Activated B cell treated with CpG ODN at 0.5 μM for 24 hours (primary cell): ENCODE measurements at regions of chr21 and their contacts with region 1.

Region 1: DNA sequence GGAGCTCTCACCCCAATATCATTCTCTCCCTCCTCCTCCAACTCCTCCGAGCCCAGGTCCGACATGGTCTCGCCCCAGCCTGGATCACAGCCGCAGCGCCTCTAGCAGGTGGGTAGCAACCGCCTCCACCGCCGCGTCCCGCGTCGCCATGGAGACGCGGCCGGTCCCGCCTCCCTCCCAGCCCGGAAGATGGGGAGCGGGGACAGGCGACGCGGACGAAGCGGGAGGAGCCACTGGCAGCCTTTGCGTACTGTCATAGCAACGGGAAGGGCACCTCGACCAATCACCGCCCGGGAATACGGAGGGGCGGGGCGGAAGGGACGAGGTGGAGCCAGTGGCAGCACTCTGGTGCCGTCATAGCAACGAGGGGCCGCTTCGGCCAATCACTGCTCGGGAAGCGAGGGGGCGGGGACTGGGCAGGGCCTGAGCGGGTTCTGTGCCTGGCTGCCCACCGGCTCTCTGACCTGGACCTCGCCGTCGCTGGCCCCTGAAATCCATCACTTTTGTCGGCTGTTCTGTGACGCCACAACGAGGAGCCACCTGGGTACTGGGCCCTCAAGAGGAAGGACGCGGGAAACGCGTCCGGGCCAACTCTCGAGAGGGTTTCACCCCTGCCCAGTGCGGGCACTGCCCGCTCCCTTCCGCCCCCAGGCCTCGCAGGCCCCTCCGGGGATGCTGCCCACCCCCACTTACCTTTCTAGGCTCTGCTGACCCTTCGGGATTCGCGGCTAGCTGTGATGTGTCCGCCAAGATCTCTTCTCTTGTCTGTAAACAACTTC is at the start of gene RSPH1:
- DNase-seq: peak; percentile 99
- ATAC-seq: peak; percentile 96
- H3K4me3 Mint-ChIP-seq: peak within 1 kb of the TSS; percentile 88
- H3K27ac Mint-ChIP-seq: peak within 1 kb of the TSS; percentile 83
- H3K4me1 Mint-ChIP-seq: peaks cover 13% of the 10 kb centered on the region
- H3K27me3 Mint-ChIP-seq: no peaks in the 10 kb centered on the region
- CTCF ChIP-seq: no peak
- total RNA-seq, gene RSPH1: 0.38 TPM in 1 of 2 replicates, not detected in the other

Region 2: GRCh38 chr21:41879190-41879998 is 616.9 kb before region 1 on chr21 and contains the start of gene PRDM15:
- CTCF ChIA-PET with region 1: no interaction called
- POLR2A ChIA-PET with region 1: no interaction called
- intact Hi-C with region 1: loop called (anchors 1 kb)
- DNase-seq: peak; percentile 83
- ATAC-seq: peak; percentile 63
- H3K4me3 Mint-ChIP-seq: peak within 1 kb of the TSS; percentile 90
- H3K27ac Mint-ChIP-seq: peak within 1 kb of the TSS; percentile 93
- H3K4me1 Mint-ChIP-seq: peaks cover 39% of the 10 kb centered on the region
- H3K27me3 Mint-ChIP-seq: no peaks in the 10 kb centered on the region
- CTCF ChIP-seq: no peak
- total RNA-seq, gene PRDM15: 12.8 and 13.6 TPM in 2 replicates

Region 3: GRCh38 chr21:42125571-42126544 is 370.5 kb before region 1 on chr21:
- CTCF ChIA-PET with region 1: no interaction called
- POLR2A ChIA-PET with region 1: no interaction called
- intact Hi-C with region 1: no loop called
- DNase-seq: no peak
- ATAC-seq: no peak
- H3K4me3 Mint-ChIP-seq: no peak overlapping the region
- H3K27ac Mint-ChIP-seq: no peak overlapping the region
- H3K4me1 Mint-ChIP-seq: peaks cover 8% of the 10 kb centered on the region
- H3K27me3 Mint-ChIP-seq: peaks cover 37% of the 10 kb centered on the region
- CTCF ChIP-seq: no peak

Region 4: DNA sequence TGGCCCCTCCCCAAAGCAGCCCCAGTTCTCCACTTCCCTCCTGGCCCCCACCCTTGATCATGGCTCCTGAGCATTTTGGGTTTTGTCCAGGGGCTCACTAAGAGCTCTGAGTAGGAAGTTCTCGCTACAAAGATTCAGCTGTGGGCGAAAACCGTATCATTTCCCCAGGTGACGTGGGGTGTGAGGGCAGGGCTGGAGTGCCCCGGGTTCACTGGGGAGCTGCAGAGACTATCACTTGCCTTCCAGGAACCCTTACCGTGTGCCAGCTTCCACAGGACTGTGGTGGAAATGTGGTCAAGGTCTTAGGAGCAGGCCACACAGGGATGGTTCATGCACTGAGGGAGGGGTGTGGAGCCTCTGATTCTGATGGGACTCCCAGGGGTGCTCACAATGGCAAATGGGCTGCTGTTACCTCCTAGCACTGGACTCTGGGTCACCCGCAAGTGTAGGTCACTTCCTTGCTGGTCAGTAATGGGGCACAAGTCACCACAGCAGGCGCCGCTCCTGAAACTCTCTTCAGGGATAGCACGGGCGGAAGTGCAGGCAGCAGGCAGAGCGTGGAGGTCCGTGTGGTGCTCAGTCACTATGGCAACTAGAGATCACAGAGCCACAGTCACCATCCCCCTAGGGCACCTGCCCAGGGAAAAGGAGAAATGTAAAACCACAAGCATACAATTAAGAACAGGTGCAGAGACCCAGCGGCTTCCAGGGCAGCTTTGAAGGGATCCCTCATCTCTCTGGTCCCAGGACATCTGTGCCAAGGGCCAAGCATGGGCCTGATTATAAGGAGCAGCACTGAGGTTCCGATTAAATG is 35.7 kb before region 1 on chr21:
- CTCF ChIA-PET with region 1: no interaction called
- POLR2A ChIA-PET with region 1: interaction called, 5 read pairs
- intact Hi-C with region 1: loop called (anchors 1 kb)
- DNase-seq: peak; percentile 62
- ATAC-seq: peak; percentile 60
- H3K4me3 Mint-ChIP-seq: peak overlapping the region; percentile 78
- H3K27ac Mint-ChIP-seq: peak overlapping the region; percentile 98
- H3K4me1 Mint-ChIP-seq: peaks cover 65% of the 10 kb centered on the region
- H3K27me3 Mint-ChIP-seq: no peaks in the 10 kb centered on the region
- CTCF ChIP-seq: no peak

Region 5: DNA sequence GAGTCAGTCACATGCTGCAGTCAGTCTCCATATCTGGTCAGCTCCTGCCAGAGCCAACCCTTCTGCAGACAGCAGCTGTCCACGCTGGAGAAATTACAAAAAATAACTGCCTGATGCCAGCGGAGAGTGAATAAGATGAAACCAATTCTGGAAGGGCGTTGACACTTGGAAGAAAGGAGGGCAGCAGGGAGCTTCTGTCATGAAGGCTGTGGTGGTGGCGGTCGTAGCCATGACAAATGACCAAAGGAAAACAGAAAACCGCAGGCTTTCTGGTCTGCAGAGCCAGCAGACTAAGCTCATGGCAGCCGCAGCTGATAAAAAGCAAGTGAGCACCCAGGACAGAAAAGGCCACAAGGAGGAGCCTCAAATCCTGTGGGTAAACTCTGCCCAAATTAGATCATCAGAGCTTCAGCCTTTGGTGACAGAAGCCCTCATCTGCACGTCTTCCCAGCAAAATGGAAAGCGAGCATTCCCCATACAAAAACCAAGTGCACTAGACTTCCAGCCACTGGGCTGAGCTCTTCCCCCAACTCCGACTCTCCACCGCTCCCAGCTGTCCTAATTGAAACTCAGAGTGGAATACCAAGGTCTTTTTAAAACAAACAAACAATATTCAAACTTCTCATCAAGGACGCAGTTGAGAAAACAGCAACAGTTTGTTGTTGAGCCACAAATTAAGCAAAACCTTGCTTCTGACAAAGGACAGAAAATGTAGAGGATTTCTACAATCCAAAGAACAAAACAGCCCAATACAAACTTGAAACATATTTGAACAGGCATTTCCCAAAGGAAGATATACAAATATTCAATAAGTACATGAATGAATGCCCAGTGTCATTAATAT is 28.9 kb before region 1 on chr21:
- CTCF ChIA-PET with region 1: no interaction called
- POLR2A ChIA-PET with region 1: interaction called, 5 read pairs
- intact Hi-C with region 1: loop called (anchors 1 kb)
- DNase-seq: peak; percentile 13
- ATAC-seq: no peak
- H3K4me3 Mint-ChIP-seq: peak overlapping the region; percentile 6
- H3K27ac Mint-ChIP-seq: no peak overlapping the region
- H3K4me1 Mint-ChIP-seq: peaks cover 69% of the 10 kb centered on the region
- H3K27me3 Mint-ChIP-seq: peaks cover 3% of the 10 kb centered on the region
- CTCF ChIP-seq: no peak

Region 6: DNA sequence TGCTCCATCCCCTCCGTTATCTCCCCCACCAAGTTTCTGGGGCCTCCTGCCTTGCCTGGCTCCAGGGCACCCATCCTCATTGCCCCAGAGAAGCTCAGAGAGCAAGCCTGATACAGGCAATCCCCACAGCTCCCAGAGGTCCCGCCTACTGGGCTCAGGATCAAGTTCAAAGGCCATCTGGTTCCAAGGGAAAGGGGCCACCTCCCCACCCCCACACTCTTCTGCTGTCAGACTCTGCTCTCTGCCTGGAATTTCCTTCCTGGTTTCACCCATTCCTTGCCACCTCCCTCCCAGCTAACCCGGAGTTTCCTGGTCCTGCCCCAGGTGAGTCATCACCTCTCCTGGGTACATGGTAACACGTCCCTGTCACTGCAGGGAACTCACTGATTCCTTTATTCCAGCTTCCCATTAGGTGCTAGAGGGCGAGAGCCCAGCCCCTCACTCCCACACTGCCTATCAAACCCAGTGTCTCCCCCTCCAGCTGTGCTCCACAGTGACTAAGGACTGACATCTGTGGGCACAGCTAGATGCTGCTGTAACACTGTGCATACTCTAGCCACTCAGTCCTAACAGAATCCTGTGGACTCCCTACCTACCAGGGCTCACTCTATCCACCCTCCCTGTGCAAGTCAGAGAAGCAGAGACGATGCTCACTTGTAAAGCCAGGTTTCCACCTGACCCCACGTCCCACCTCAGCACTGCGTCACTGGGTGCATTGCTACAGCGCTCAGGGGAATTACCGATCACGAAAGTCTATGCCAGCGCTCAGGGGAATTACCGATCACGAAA is 22.1 kb before region 1 on chr21:
- CTCF ChIA-PET with region 1: no interaction called
- POLR2A ChIA-PET with region 1: no interaction called
- intact Hi-C with region 1: loop called (anchors 2 kb)
- DNase-seq: peak; percentile 36
- ATAC-seq: peak; percentile 95
- H3K4me3 Mint-ChIP-seq: peak overlapping the region; percentile 11
- H3K27ac Mint-ChIP-seq: peak overlapping the region; percentile 36
- H3K4me1 Mint-ChIP-seq: peaks cover 21% of the 10 kb centered on the region
- H3K27me3 Mint-ChIP-seq: peaks cover 12% of the 10 kb centered on the region
- CTCF ChIP-seq: no peak

Region 7: DNA sequence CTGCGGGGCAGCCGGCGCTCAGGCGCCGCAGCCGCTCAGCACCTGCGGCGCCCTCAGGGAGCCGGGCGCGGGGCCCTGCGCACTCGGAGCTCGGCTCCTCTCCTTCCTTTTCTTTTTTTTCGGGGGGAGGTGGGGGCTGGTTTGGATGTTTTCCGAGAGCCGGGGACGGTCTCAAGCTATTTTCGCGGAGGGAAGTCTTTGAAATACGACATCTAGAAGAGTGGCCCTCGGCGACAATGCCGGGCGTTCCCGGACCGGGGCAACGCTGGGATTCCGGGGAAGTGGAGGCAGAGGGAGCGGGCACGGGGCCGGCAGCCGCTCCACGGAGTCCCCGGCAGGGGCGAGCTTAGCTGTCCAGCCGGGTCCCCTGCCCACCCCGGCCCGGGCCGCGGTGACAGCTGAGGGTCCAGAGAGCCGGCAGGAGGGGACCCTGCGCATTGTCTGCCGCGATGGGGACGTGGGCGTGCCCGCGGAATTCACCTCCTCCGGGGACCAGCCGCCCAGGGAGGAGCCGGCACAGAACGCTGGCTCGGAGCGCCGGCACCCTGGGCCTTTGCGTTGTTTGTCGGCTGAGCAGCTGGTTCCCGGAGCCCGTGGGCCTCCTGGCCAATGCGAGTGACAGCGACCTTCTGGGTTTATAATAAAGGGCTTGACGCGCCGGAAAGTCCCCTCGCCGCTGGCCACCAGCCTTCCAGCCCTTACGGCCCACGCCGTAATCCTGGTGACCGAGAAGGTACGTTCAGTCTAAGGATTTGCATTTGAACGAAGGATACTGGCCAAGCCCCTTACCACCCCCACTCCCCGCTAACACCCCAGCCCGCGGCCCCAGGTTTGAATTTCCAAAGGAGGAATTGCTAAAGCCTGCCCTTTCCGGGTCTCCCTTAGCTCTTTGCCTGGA is 17.9 kb after region 1 on chr21:
- CTCF ChIA-PET with region 1: interaction called, 3 read pairs
- POLR2A ChIA-PET with region 1: interaction called, 7 read pairs
- intact Hi-C with region 1: loop called (anchors 1 kb)
- DNase-seq: peak; percentile 73
- ATAC-seq: peak; percentile 75
- H3K4me3 Mint-ChIP-seq: peak overlapping the region; percentile 84
- H3K27ac Mint-ChIP-seq: peak overlapping the region; percentile 87
- H3K4me1 Mint-ChIP-seq: peaks cover 43% of the 10 kb centered on the region
- H3K27me3 Mint-ChIP-seq: no peaks in the 10 kb centered on the region
- CTCF ChIP-seq: no peak

Region 8: GRCh38 chr21:42524349-42525151 is 28.2 kb after region 1 on chr21:
- CTCF ChIA-PET with region 1: no interaction called
- POLR2A ChIA-PET with region 1: interaction called, 6 read pairs
- intact Hi-C with region 1: loop called (anchors 1 kb)
- DNase-seq: peak; percentile 90
- ATAC-seq: peak; percentile 83
- H3K4me3 Mint-ChIP-seq: peak overlapping the region; percentile 78
- H3K27ac Mint-ChIP-seq: peak overlapping the region; percentile 95
- H3K4me1 Mint-ChIP-seq: peaks cover 87% of the 10 kb centered on the region
- H3K27me3 Mint-ChIP-seq: no peaks in the 10 kb centered on the region
- CTCF ChIP-seq: no peak

Region 9: DNA sequence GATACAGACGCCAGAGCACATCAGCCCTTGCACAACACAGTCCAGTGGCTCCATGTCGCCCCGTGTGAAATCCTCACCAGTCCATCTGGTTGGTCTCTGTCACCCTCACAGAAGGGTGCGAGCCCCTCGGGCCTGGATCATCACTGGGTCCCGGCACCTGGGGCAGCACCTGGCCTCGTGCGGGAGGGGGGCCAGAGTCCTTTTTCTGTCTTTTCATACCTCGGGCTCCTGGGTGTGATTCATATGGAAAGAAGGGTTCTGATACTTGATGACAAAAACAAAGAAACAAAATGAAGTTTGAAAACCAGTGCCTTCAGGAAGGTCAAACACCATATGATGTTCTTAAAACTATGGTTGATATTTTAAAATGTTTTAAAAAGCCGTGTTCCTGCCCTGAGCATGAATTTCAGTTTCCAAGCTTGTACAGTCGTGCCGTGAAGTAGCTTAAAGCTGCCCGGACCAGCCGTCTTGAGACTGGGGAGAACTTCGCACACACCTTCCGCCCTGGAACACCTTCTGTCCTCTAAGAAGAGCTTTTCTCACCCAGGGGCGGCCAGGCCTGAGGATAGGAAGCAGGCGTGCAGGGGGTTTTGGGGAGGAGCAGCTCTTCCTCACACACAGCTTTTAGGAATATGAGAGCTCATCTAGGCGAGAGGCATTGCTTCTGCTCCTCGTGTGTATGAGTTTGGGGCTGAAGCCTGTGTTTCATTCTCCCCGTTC is 52.5 kb after region 1 on chr21:
- CTCF ChIA-PET with region 1: no interaction called
- POLR2A ChIA-PET with region 1: no interaction called
- intact Hi-C with region 1: no loop called
- DNase-seq: no peak
- ATAC-seq: no peak
- H3K4me3 Mint-ChIP-seq: no peak overlapping the region
- H3K27ac Mint-ChIP-seq: no peak overlapping the region
- H3K4me1 Mint-ChIP-seq: peaks cover 3% of the 10 kb centered on the region
- H3K27me3 Mint-ChIP-seq: no peaks in the 10 kb centered on the region
- CTCF ChIP-seq: no peak